AG04449 (cell line): ENCODE measurements at regions of chr5 and their contacts with region 1.

Region 1: DNA sequence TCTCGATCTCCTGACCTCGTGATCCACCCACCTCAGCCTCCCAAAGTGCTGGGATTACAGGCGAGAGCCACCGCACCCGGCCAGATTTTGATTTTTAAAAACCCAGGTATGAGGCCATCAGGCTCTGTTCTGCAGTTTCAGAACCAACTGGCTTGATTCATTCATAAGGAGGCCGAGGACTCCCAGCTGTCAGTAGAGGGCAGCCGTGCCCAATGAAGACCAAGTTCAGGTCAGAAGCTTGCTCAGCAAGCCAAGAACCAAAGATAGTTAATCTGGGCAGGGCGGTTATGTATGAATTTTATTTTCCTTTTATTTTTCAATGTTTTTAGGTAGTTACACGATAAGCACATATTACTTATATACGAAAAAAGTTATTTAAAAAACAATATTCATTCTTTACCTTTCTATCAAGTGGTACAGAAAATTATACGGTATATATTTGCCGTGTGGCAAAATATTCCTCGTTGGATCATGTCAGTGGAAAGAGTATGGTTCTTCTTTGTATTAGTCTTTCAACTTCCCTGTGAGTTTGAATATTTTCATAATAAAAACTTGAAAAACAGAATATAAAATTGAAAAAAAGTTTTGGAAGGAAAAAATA is 18.0 kb downstream of the MGAT1 start:
- DNase-seq: peak; percentile 46
- H3K4me3 ChIP-seq: no peak overlapping the region
- CTCF ChIP-seq: peak; percentile 81

Region 2: DNA sequence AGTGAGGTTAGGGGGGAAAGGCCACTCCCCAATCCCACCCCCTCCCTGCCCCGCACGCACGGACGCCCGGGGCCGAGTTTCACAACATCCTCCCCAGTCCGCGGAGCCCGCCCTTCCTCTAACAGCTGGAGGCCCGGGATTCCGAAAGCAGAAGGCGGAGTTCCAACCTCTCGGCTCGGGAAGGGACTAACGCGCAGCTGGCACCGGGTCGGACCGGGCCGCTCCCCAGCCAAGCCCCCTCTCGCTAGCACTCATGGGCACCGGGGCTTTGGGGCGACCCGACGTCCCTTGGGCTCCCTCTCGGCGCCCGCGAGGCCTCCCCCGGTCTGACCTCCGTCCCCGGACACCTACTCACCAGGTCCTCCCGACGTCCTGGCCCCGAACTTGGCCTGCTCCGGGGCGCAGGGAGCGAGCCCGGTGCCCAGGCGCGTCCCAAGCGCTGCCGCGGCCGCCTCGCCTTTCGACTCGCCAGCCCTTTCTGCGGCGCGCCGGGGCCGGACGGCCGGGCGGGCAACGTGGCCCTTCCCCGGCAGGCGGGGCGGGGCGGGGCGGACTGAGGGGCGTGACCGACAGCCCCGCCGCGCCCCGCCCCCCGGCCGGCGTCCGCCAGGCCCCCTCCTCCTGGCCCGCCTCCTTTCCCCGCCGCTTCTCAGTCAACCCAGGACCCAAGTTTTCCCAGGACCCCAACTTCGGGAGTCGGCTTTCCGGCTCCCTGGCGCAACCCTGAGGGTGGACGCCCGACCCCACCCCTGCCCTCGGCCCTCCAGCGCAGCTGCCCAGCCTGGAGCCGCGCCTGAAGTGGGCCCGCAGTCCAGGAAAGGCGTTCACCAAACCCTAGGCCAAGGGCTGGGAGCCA is 18.0 kb after region 1 on chr5 and contains the start of gene MGAT1:
- CTCF ChIA-PET with region 1: interaction called, 66 read pairs
- POLR2A ChIA-PET with region 1: interaction called, 15 read pairs
- DNase-seq: no peak
- H3K4me3 ChIP-seq: peak within 1 kb of the TSS; percentile 97
- CTCF ChIP-seq: no peak

Region 3: GRCh38 chr5:180831139-180832048 is 46.8 kb after region 1 on chr5:
- CTCF ChIA-PET with region 1: interaction called, 6 read pairs
- POLR2A ChIA-PET with region 1: interaction called, 10 read pairs
- DNase-seq: no peak
- H3K4me3 ChIP-seq: peak overlapping the region; percentile 95
- CTCF ChIP-seq: peak; percentile 4

Region 4: GRCh38 chr5:180862645-180863044 is 78.0 kb after region 1 on chr5:
- CTCF ChIA-PET with region 1: interaction called, 37 read pairs
- POLR2A ChIA-PET with region 1: no interaction called
- DNase-seq: no peak
- H3K4me3 ChIP-seq: no peak overlapping the region
- CTCF ChIP-seq: no peak

Region 5: GRCh38 chr5:180868960-180869359 is 84.4 kb after region 1 on chr5:
- CTCF ChIA-PET with region 1: interaction called, 37 read pairs
- POLR2A ChIA-PET with region 1: no interaction called
- DNase-seq: no peak
- H3K4me3 ChIP-seq: no peak overlapping the region
- CTCF ChIP-seq: peak; percentile 78